ENCODE measurements at regions of chr7 and their contacts with region 1.

Region 1: GRCh38 chr7:96414931-96415292 is 93.0 kb upstream of the SLC25A13 start:
- DNase-seq: peak; percentile 71
- ATAC-seq: peak; percentile 80
- H3K4me3 ChIP-seq: peak overlapping the region in 2 of 3 experiments; percentile 36 to 44; a peak in 3 of 6 replicates
- H3K27ac ChIP-seq: peak overlapping the region; percentile 96
- H3K4me1 ChIP-seq: peaks cover 43% of the 10 kb centered on the region
- H3K27me3 ChIP-seq: no peaks in the 10 kb centered on the region
- CTCF ChIP-seq: peak; percentile 92
- EP300 ChIP-seq: 0 out of 4 replicates have a peak, but pooled peaks of 1 of the 2 experiments have one; percentile 27
- POLR2A ChIP-seq: no peak
- RAD21 ChIP-seq: peak; percentile 82

Region 2: GRCh38 chr7:95916573-95917297 is 498.2 kb before region 1 on chr7:
- CTCF ChIA-PET with region 1: no interaction called
- POLR2A ChIA-PET with region 1: no interaction called
- in situ Hi-C with region 1: no loop called
- intact Hi-C with region 1: loop called (anchors 10 kb)
- DNase-seq: peak; percentile 52
- ATAC-seq: peak; percentile 94
- H3K4me3 ChIP-seq: peak overlapping the region; percentile 48 to 67 (median 62)
- H3K27ac ChIP-seq: no peak overlapping the region
- H3K4me1 ChIP-seq: peaks cover 13% of the 10 kb centered on the region
- H3K27me3 ChIP-seq: 0 out of 5 replicates have a peak, but pooled peaks cover 0 to 7% of the 10 kb centered on the region in 2 experiments
- CTCF ChIP-seq: peak; percentile 84
- EP300 ChIP-seq: no peak
- POLR2A ChIP-seq: no peak
- RAD21 ChIP-seq: peak; percentile 71

Region 3: GRCh38 chr7:96236198-96237039 is 178.5 kb before region 1 on chr7:
- CTCF ChIA-PET with region 1: no interaction called
- POLR2A ChIA-PET with region 1: no interaction called
- in situ Hi-C with region 1: no loop called
- intact Hi-C with region 1: loop called (anchors 10 kb)
- DNase-seq: no peak
- ATAC-seq: no peak
- H3K4me3 ChIP-seq: no peak overlapping the region
- H3K27ac ChIP-seq: no peak overlapping the region
- H3K4me1 ChIP-seq: peaks cover 3% of the 10 kb centered on the region; the same call in 1 of the 2 replicates
- H3K27me3 ChIP-seq: no peaks in the 10 kb centered on the region
- CTCF ChIP-seq: no peak
- EP300 ChIP-seq: no peak
- POLR2A ChIP-seq: no peak
- RAD21 ChIP-seq: no peak

Region 4: GRCh38 chr7:96426027-96426426 is 11.1 kb after region 1 on chr7:
- CTCF ChIA-PET with region 1: no interaction called
- POLR2A ChIA-PET with region 1: interaction called, 13 read pairs
- in situ Hi-C with region 1: no loop called
- intact Hi-C with region 1: no loop called
- DNase-seq: no peak
- ATAC-seq: no peak
- H3K4me3 ChIP-seq: no peak overlapping the region
- H3K27ac ChIP-seq: peak overlapping the region; percentile 87
- H3K4me1 ChIP-seq: peaks cover 34% of the 10 kb centered on the region
- H3K27me3 ChIP-seq: no peaks in the 10 kb centered on the region
- CTCF ChIP-seq: no peak
- EP300 ChIP-seq: no peak
- POLR2A ChIP-seq: no peak
- RAD21 ChIP-seq: no peak

Region 5: GRCh38 chr7:96701258-96701657 is 286.3 kb after region 1 on chr7:
- CTCF ChIA-PET with region 1: no interaction called
- POLR2A ChIA-PET with region 1: no interaction called
- in situ Hi-C with region 1: no loop called
- intact Hi-C with region 1: loop called (anchors 2 kb)
- DNase-seq: peak; percentile 67
- ATAC-seq: peak; percentile 99
- H3K4me3 ChIP-seq: no peak overlapping the region; a peak in 1 of 6 replicates
- H3K27ac ChIP-seq: peak overlapping the region; percentile 55
- H3K4me1 ChIP-seq: peaks cover 73% of the 10 kb centered on the region
- H3K27me3 ChIP-seq: no peaks in the 10 kb centered on the region
- CTCF ChIP-seq: no peak
- EP300 ChIP-seq: peak in 1 of 2 experiments; percentile 51; a peak in 1 of 4 replicates
- POLR2A ChIP-seq: no peak
- RAD21 ChIP-seq: no peak

Region 6: DNA sequence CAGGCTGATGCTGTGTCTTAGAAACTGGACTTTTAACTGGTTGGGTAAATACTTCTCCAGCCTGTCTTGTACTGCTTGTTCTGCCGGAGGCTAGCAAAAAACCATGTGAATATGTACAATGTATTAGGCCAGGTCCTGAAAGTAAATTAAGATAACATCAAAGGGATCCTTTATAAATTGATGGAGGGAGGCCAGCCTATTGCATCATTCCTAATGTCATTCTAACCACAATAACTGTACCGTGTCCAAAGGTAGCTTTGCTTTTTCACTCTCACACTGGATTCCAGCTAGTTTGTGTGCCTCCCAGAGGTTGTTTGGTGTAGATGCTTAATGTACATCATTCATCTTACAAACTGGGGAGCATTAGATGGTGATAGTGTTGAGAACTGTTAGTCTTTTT is 385.9 kb after region 1 on chr7:
- CTCF ChIA-PET with region 1: no interaction called
- POLR2A ChIA-PET with region 1: no interaction called
- in situ Hi-C with region 1: no loop called
- intact Hi-C with region 1: loop called (anchors 1 kb)
- DNase-seq: peak; percentile 81
- ATAC-seq: peak; percentile 93
- H3K4me3 ChIP-seq: no peak overlapping the region
- H3K27ac ChIP-seq: no peak overlapping the region
- H3K4me1 ChIP-seq: peaks cover 22% of the 10 kb centered on the region
- H3K27me3 ChIP-seq: 0 out of 5 replicates have a peak, but pooled peaks cover 0 to 2% of the 10 kb centered on the region in 2 experiments
- CTCF ChIP-seq: peak; percentile 56
- EP300 ChIP-seq: peak; percentile 62 to 74; a peak in 2 of 4 replicates
- POLR2A ChIP-seq: no peak
- RAD21 ChIP-seq: no peak

Region 7: GRCh38 chr7:97027427-97028234 is 612.7 kb after region 1 on chr7:
- CTCF ChIA-PET with region 1: interaction called, 15 read pairs
- POLR2A ChIA-PET with region 1: no interaction called
- in situ Hi-C with region 1: loop called (anchors 10 kb)
- intact Hi-C with region 1: loop called (anchors 1 kb)
- DNase-seq: peak; percentile 70
- ATAC-seq: peak; percentile 86
- H3K4me3 ChIP-seq: peak overlapping the region; percentile 53 to 77 (median 68)
- H3K27ac ChIP-seq: no peak overlapping the region
- H3K4me1 ChIP-seq: peaks cover 24% of the 10 kb centered on the region
- H3K27me3 ChIP-seq: peaks cover 0 to 42% of the 10 kb centered on the region in 2 experiments; a peak in 4 of 5 replicates
- CTCF ChIP-seq: peak; percentile 96
- EP300 ChIP-seq: no peak
- POLR2A ChIP-seq: no peak
- RAD21 ChIP-seq: peak; percentile 93

Measured in HepG2 (cell line).